Transverse colon (tissue), 4 donors: ENCODE measurements at regions of chr2 and their contacts with region 1.

Region 1: GRCh38 chr2:190534310-190535120 is at the start of gene NEMP2:
- DNase-seq: peak; percentile 84
- H3K4me3 ChIP-seq: peak within 1 kb of the TSS; percentile 45 to 91 (median 80)
- H3K27ac ChIP-seq: peak within 1 kb of the TSS; percentile 93 to 98 (median 98)
- H3K4me1 ChIP-seq: peaks cover 0 to 31% (median 19%) of the 10 kb centered on the region in 4 donors
- H3K27me3 ChIP-seq: no peaks in the 10 kb centered on the region
- CTCF ChIP-seq: peak in 3 of 5 experiments; percentile 5 to 29 (median 15)
- EP300 ChIP-seq: no peak
- POLR2A ChIP-seq: peak; percentile 76
- total RNA-seq, gene NEMP2: 0.20 to 2.4 (median 1.6) TPM in 3 of 4 donors, not detected in the other

Region 2: GRCh38 chr2:190486037-190486623 is 48.4 kb before region 1 on chr2:
- in situ Hi-C with region 1: no loop called
- intact Hi-C with region 1: no loop called
- DNase-seq: no peak
- H3K4me3 ChIP-seq: no peak overlapping the region
- H3K27ac ChIP-seq: no peak overlapping the region
- H3K4me1 ChIP-seq: peaks cover 0 to 4% (median 0%) of the 10 kb centered on the region in 4 donors
- H3K27me3 ChIP-seq: no peaks in the 10 kb centered on the region
- CTCF ChIP-seq: no peak
- EP300 ChIP-seq: no peak
- POLR2A ChIP-seq: no peak

Region 3: DNA sequence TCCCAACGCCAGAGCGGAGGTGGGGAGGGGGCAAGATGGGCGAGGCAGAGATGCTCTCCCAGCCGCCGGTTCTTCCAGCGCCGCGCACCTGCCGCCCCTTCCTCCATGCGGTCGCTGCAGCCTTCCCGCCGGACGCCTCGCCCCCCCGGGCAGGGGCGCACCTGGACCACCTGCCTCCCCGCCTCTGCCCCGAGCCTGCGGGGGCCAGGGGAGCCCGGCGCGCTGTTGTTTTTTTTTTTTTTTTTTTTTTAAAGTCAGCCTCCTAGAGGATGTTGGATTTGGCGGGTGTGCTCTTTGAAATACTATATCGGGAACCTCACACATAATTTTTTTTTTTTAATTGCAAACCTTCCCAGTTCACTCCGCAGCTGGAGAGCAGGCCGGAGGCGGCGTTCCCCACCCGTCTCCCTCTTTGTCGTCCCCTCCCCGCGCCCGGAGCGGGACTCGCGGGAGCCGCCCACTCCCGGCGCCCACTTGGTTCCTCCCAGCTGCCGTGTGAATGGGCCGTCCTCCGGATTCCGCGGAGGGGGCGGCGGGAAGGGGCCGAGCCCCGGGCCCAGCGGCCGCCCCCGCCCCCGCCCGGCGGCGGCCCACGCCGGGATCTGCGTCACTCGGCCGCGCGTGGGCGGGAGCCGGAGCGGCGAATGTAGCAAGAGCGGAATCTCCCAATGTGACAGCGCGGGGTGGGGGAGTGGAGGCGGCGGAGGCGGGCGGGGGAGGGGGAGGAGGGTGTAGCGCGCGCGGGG is 113.9 kb after region 1 on chr2:
- in situ Hi-C with region 1: loop called in 1 of 4 experiments (anchors 25 kb)
- intact Hi-C with region 1: loop called (anchors 5 kb)
- DNase-seq: peak; percentile 89
- H3K4me3 ChIP-seq: peak overlapping the region; percentile 63 to 90 (median 78)
- H3K27ac ChIP-seq: peak overlapping the region; percentile 93 to 99 (median 96)
- H3K4me1 ChIP-seq: peaks cover 3 to 33% (median 17%) of the 10 kb centered on the region in 4 donors
- H3K27me3 ChIP-seq: no peaks in the 10 kb centered on the region
- CTCF ChIP-seq: no peak
- EP300 ChIP-seq: peak; percentile 1
- POLR2A ChIP-seq: peak; percentile 62